ENCODE measurements at regions of chr17 and their contacts with region 1.

Region 1: GRCh38 chr17:40021451-40021971 is 6.3 kb downstream of the CSF3 start:
- DNase-seq: peak in 1 of 4 experiments; percentile 9
- ATAC-seq: no peak
- H3K4me3 ChIP-seq: no peak overlapping the region
- H3K27ac ChIP-seq: no peak overlapping the region
- H3K4me1 ChIP-seq: peaks cover 0 to 35% of the 10 kb centered on the region in 2 experiments; a peak in 3 of 5 replicates
- H3K27me3 ChIP-seq: no peaks in the 10 kb centered on the region
- CTCF ChIP-seq: no peak
- EP300 ChIP-seq: no peak
- POLR2A ChIP-seq: no peak
- RAD21 ChIP-seq: no peak

Region 2: GRCh38 chr17:40168262-40168832 is 146.8 kb after region 1 on chr17:
- CTCF ChIA-PET with region 1: no interaction called
- POLR2A ChIA-PET with region 1: no interaction called
- in situ Hi-C with region 1: no loop called
- intact Hi-C with region 1: loop called (anchors 10 kb)
- DNase-seq: peak; percentile 41 to 57 (median 48)
- ATAC-seq: peak; percentile 79
- H3K4me3 ChIP-seq: no peak overlapping the region
- H3K27ac ChIP-seq: no peak overlapping the region
- H3K4me1 ChIP-seq: no peaks in the 10 kb centered on the region; a peak in 1 of 5 replicates
- H3K27me3 ChIP-seq: no peaks in the 10 kb centered on the region
- CTCF ChIP-seq: peak; percentile 58 to 84 (median 72); a peak in 4 of 6 replicates
- EP300 ChIP-seq: no peak
- POLR2A ChIP-seq: no peak
- RAD21 ChIP-seq: peak; percentile 68 to 85